GM18951 (cell line): ENCODE measurements at regions of chr17 and their contacts with region 1.

Region 1: GRCh38 chr17:41665566-41666236 is 23.0 kb upstream of the EIF1 start:
- POLR2A ChIP-seq: no peak

Region 2: DNA sequence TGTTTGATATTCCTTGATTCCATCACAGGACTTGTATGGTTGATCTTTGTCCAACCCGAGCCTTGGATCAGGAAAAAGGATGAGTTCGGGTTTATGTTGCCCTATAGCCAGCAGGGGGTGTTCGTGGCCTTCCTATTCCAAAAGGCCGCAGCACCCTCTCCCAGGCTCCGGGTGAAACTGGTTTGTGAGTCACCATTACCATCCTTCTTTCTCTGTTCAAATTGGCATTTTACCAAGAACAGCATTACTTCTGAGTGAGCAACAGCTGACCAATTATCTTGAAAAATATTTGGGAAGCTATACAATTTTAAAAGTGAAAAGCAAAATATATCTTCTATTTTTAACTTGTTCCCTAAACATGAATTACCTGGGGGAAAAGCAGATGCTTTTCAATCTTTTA is 756.4 kb before region 1 on chr17:
- in situ Hi-C with region 1: loop called (anchors 25 kb)
- POLR2A ChIP-seq: no peak

Region 3: GRCh38 chr17:41549596-41550039 is 116.1 kb before region 1 on chr17:
- in situ Hi-C with region 1: loop called (anchors 10 kb)
- POLR2A ChIP-seq: no peak